CD4-positive, alpha-beta memory T cell (primary cell): ENCODE measurements at regions of chr6 and their contacts with region 1.

Region 1: DNA sequence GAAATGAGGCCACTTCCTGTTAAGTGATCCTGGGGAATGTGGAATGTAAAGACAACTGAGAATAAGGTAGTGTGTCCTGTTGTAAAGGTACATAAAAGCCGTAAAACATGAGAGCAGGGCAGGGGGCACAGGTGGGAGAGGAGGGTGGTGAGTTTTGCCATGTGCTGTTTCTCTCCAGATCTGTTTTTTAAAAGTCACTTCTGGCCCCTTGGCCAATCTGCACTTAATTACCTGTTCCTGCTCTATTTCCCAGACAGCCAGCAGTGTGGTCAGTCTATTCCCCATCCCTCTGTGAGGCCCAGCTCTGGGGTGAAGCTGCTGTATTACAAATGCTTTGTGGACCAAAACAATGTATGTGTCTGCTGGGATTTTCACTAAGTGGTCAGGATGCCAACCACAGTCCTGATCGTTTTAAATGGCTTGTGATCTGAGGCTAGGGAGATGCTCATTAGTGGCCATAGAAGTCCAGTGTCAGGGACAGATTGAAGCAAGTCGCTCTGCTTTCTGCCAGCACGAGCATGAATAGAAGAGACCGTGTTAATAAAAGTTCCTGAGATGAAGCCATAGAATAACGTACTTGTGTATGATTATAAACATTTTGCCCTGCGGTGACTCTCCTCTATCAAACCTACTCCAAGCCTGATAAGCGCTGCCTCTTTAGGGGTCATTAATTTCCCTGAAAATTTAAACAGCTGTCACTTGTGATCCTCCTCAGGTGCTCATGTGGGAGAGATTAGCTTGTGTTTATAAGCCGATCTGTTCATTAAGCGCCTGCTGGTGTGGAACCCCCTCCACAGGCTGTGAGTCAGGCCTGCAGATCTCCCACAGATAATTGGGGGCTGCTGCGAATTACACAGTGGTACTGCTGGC is 111.8 kb upstream of the CENPW start:
- DNase-seq: no peak
- H3K4me3 ChIP-seq: no peak overlapping the region
- H3K4me3 Mint-ChIP-seq: no peak overlapping the region
- H3K27ac ChIP-seq: no peak overlapping the region
- H3K27ac Mint-ChIP-seq: no peak overlapping the region
- H3K4me1 ChIP-seq: no peaks in the 10 kb centered on the region
- H3K4me1 Mint-ChIP-seq: no peaks in the 10 kb centered on the region
- H3K27me3 ChIP-seq: no peaks in the 10 kb centered on the region
- H3K27me3 Mint-ChIP-seq: no peaks in the 10 kb centered on the region

Region 2: GRCh38 chr6:126143761-126144251 is 84.3 kb before region 1 on chr6:
- CTCF ChIA-PET with region 1: no interaction called
- POLR2A ChIA-PET with region 1: no interaction called
- intact Hi-C with region 1: no loop called
- DNase-seq: no peak
- H3K4me3 ChIP-seq: no peak overlapping the region
- H3K4me3 Mint-ChIP-seq: no peak overlapping the region
- H3K27ac ChIP-seq: no peak overlapping the region
- H3K27ac Mint-ChIP-seq: no peak overlapping the region
- H3K4me1 ChIP-seq: no peaks in the 10 kb centered on the region
- H3K4me1 Mint-ChIP-seq: no peaks in the 10 kb centered on the region
- H3K27me3 ChIP-seq: no peaks in the 10 kb centered on the region
- H3K27me3 Mint-ChIP-seq: peaks cover 0 to 2% of the 10 kb centered on the region in 2 donors

Region 3: DNA sequence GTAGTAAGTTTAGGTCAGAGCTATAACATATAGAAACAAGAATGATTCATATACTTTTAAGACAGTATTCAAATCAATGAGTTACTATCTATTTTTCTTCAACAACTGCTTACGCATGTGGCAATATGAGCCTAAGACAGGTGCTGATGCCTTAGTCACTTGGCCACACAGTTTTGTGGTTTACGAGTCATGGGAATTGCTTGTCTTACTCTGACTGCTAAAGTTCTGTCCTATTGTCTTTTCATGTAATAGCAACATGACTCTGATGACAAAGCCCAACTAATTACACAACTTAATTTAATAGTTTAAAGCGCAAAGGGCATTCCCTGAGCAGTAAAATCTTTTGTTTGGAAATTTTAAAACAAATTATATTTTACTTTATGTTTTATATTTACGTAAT is 47.5 kb before region 1 on chr6:
- CTCF ChIA-PET with region 1: no interaction called
- POLR2A ChIA-PET with region 1: no interaction called
- intact Hi-C with region 1: no loop called
- DNase-seq: no peak
- H3K4me3 ChIP-seq: no peak overlapping the region
- H3K4me3 Mint-ChIP-seq: no peak overlapping the region
- H3K27ac ChIP-seq: no peak overlapping the region
- H3K27ac Mint-ChIP-seq: no peak overlapping the region
- H3K4me1 ChIP-seq: no peaks in the 10 kb centered on the region
- H3K4me1 Mint-ChIP-seq: no peaks in the 10 kb centered on the region
- H3K27me3 ChIP-seq: no peaks in the 10 kb centered on the region
- H3K27me3 Mint-ChIP-seq: no peaks in the 10 kb centered on the region

Region 4: GRCh38 chr6:126217497-126217896 is 10.6 kb before region 1 on chr6:
- CTCF ChIA-PET with region 1: no interaction called
- POLR2A ChIA-PET with region 1: no interaction called
- intact Hi-C with region 1: loop called (anchors 1 kb)
- DNase-seq: no peak
- H3K4me3 ChIP-seq: no peak overlapping the region
- H3K4me3 Mint-ChIP-seq: no peak overlapping the region
- H3K27ac ChIP-seq: no peak overlapping the region
- H3K27ac Mint-ChIP-seq: no peak overlapping the region
- H3K4me1 ChIP-seq: no peaks in the 10 kb centered on the region
- H3K4me1 Mint-ChIP-seq: no peaks in the 10 kb centered on the region
- H3K27me3 ChIP-seq: no peaks in the 10 kb centered on the region
- H3K27me3 Mint-ChIP-seq: no peaks in the 10 kb centered on the region